K562 (cell line): ENCODE measurements at regions of chr7 and their contacts with region 1.

Region 1: DNA sequence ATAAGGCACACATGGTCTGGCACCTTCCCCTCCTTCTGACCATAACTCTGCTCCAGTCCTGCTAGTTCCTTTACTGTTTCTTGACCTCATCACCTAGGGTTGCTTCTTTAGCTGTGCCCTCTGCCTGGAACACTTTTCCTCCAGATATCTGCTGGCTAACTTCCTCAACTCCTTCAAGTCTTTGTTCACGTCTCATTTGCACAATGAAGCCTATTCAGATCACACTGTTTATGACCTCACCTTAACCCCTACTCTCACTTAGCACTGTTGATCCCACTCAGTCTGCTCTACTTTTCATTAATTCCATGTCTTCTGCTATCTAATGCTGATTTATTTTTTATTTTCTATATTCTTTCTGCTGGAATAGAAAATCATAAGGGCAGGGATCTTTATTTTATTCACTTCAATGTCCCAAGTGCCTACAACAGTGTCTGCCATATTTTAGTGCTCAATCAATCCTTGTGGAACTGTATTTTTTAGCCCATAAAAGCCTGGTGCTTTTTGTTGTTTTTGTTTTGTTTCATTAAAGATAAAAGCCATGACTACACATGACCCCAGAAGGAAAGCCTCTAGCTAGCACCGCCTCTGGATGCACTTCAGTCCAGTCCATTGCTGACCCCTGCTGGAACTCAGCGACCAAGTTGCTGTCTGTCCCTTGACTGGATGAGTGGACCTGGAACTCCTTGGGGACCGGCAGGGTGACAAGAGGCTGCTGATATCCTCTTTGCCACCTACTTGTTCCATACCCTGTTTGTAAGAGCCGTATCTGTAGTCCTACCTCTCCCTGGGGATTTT is 12.3 kb downstream of the KLF14 start:
- DNase-seq: peak; percentile 44 to 86 (median 70)
- ATAC-seq: peak; percentile 100
- H3K4me3 ChIP-seq: no peak overlapping the region
- H3K27ac ChIP-seq: no peak overlapping the region
- H3K4me1 ChIP-seq: no peaks in the 10 kb centered on the region
- H3K27me3 ChIP-seq: peaks cover 13 to 30% of the 10 kb centered on the region in 2 experiments
- CTCF ChIP-seq: peak; percentile 92 to 97 (median 95)
- EP300 ChIP-seq: 0 out of 2 replicates have a peak, but pooled peaks have one; percentile 35
- POLR2A ChIP-seq: no peak
- RAD21 ChIP-seq: peak; percentile 96 to 98

Region 2: DNA sequence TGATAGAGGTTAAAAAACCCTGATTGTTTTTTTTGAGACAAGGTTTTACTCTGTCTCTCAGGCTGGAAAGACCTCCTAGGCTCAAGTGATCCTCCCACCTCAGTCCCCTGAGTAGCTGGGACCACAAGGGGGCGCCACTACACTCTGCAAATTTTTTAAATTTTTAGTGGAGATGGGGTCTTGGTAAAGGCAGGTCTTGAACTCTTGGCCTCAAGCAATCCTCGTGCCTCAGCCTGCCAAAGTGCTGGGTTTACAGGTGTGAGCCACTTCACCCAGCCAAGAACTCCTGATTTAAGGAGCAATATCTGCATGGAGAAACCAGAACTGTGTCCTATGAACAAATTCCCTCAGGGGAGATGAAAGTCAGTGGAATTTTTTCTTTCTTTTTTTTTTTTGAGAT is 658.6 kb before region 1 on chr7:
- CTCF ChIA-PET with region 1: no interaction called
- POLR2A ChIA-PET with region 1: no interaction called
- in situ Hi-C with region 1: loop called (anchors 10 kb)
- intact Hi-C with region 1: loop called (anchors 2 kb)
- DNase-seq: peak; percentile 51 to 90 (median 64)
- ATAC-seq: peak; percentile 86
- H3K4me3 ChIP-seq: no peak overlapping the region
- H3K27ac ChIP-seq: no peak overlapping the region
- H3K4me1 ChIP-seq: peaks cover 13 to 25% of the 10 kb centered on the region in 2 experiments
- H3K27me3 ChIP-seq: no peaks in the 10 kb centered on the region
- CTCF ChIP-seq: peak; percentile 79 to 97 (median 93)
- EP300 ChIP-seq: no peak
- POLR2A ChIP-seq: no peak
- RAD21 ChIP-seq: peak; percentile 65 to 72

Region 3: DNA sequence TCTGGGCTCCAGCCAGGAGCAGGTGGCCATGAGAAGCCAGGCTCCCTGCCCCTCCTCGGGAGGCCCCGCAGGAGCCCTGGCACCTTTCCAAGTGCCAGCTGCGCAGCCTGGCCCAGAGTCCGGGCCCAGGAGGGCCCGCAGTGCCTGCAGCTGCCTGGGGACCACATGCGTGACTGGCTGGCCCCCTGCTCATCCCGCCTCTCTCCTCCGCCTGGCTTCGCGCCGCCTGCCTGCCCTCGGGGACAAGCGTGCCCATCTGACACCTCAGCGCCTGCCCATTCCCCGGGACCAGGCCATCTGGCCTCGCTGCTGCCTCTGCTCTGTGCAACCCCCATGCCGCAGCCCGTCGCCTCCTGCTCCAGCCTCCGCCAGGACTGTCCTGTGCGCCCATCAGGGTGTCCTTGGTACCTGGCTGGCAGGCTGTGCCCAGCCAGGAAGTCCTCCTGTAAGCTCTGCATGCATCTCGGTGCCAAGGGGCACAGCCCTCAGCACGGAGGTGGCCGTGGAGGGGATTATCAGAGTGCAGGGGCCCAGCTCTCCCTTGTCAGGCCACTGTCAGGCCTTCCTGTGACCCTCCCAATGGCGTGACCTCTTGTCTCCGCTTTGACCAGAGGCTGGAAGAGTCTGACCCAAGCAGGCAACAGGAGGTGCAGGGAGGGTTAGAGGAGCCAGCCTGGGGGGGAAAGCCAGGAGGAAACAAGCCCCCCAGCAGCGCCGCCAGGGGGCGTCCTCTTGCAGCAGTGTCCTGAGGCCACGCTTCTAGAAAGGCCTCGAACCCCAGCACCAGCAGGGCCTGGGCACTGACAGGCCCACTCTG is 567.0 kb before region 1 on chr7:
- CTCF ChIA-PET with region 1: no interaction called
- POLR2A ChIA-PET with region 1: no interaction called
- in situ Hi-C with region 1: no loop called
- intact Hi-C with region 1: loop called (anchors 5 kb)
- DNase-seq: peak; percentile 64 to 76 (median 73)
- ATAC-seq: peak; percentile 70
- H3K4me3 ChIP-seq: no peak overlapping the region
- H3K27ac ChIP-seq: no peak overlapping the region
- H3K4me1 ChIP-seq: peaks cover 0 to 41% of the 10 kb centered on the region in 2 experiments; a peak in 3 of 5 replicates
- H3K27me3 ChIP-seq: no peaks in the 10 kb centered on the region; a peak in 1 of 5 replicates
- CTCF ChIP-seq: peak; percentile 47 to 74 (median 67)
- EP300 ChIP-seq: no peak
- POLR2A ChIP-seq: no peak; the same call in 1 of the 2 replicates
- RAD21 ChIP-seq: peak in 1 of 2 experiments; percentile 55; a peak in 2 of 4 replicates

Region 4: DNA sequence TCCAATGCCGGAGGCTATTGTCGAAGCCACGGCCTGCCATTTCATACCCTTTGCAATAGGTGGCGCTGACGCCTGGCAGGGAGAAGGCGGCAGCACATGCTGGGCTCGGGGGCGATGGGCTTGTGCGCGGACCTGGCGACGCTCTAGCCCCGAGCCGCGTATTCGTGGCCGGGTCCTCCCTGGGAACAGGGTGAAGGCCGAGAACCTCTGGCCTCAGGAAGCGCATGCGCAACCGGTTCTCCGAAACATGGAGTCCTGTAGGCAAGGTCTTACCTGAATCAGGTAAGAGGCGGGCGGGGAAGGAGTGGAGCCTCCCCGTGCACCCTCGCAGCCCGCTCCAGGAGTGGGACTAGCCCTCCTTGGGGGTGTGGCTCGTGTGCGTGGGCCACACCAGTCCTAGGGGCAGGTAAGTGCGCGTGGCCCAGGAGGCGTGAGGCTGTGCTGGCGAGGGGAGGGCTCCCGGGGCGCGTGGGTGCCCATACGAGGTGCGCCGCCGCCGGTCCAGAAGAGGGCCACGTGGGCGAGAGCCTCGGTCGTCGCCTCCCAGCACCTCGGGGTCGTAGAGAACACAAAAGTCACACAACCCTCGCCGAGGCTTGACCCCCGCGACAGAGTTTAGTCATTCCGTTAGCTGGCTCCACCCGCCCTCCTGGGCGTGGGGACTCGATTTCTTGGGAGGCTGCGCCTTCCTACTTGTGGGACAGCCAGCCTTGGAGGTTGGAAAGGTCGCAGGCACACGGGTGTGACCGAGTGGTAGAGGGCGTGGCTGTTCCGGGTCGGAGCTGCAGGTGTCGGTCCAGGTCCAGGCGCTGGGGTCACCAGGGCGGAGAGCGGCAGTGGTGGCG is 235.3 kb before region 1 on chr7:
- CTCF ChIA-PET with region 1: no interaction called
- POLR2A ChIA-PET with region 1: no interaction called
- in situ Hi-C with region 1: no loop called
- intact Hi-C with region 1: loop called (anchors 10 kb)
- DNase-seq: peak; percentile 31 to 58 (median 46)
- ATAC-seq: peak; percentile 81
- H3K4me3 ChIP-seq: no peak overlapping the region
- H3K27ac ChIP-seq: no peak overlapping the region
- H3K4me1 ChIP-seq: peaks cover 0 to 13% of the 10 kb centered on the region in 2 experiments; a peak in 3 of 5 replicates
- H3K27me3 ChIP-seq: peaks cover 17 to 52% of the 10 kb centered on the region in 2 experiments; a peak in 4 of 5 replicates
- CTCF ChIP-seq: peak; percentile 73 to 85 (median 80)
- EP300 ChIP-seq: no peak
- POLR2A ChIP-seq: no peak
- RAD21 ChIP-seq: peak; percentile 28 to 73; a peak in 3 of 4 replicates